ENCODE measurements at regions of chr14 and their contacts with region 1.

Region 1: GRCh38 chr14:61252369-61253063 is 28.6 kb downstream of the TMEM30B start:
- DNase-seq: peak; percentile 30 to 84 (median 62)
- H3K4me3 ChIP-seq: no peak overlapping the region
- H3K27ac ChIP-seq: no peak overlapping the region
- H3K27me3 ChIP-seq: peaks cover 0 to 3% (median 0%) of the 10 kb centered on the region in 45 donors
- CTCF ChIP-seq: peak; percentile 30 to 98 (median 87)

Region 2: GRCh38 chr14:60420050-60420449 is 832.5 kb before region 1 on chr14:
- intact Hi-C with region 1: no loop called
- DNase-seq: no peak
- H3K4me3 ChIP-seq: no peak overlapping the region
- H3K27ac ChIP-seq: no peak overlapping the region
- H3K27me3 ChIP-seq: peaks cover 0 to 2% (median 0%) of the 10 kb centered on the region in 45 donors
- CTCF ChIP-seq: no peak

Region 3: DNA sequence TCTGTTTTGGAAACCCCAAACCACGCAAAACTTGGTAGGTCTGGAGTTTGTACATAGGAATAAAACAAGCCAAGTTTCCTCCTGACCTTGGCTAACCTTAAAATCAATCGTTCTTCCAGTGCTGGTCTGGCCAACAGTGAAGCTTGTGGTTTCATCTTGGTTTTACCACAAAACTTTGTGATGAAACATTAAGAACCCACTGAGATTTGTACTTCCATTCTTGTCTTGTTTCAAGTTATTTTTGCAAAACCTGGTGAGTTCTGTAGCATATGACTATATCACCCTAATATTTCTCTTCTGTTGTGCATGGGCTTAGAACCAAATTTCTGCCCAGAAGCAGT is 629.6 kb before region 1 on chr14:
- intact Hi-C with region 1: loop called (anchors 2 to 5 kb)
- DNase-seq: no peak
- H3K4me3 ChIP-seq: no peak overlapping the region
- H3K27ac ChIP-seq: no peak overlapping the region
- H3K27me3 ChIP-seq: peaks cover 0 to 9% (median 0%) of the 10 kb centered on the region in 45 donors
- CTCF ChIP-seq: no peak

Region 4: GRCh38 chr14:60632777-60633176 is 619.7 kb before region 1 on chr14:
- intact Hi-C with region 1: loop called in 1 of 2 experiments (anchors 2 kb)
- DNase-seq: no peak
- H3K4me3 ChIP-seq: no peak overlapping the region
- H3K27ac ChIP-seq: no peak overlapping the region
- H3K27me3 ChIP-seq: peaks cover 0 to 25% (median 16%) of the 10 kb centered on the region in 45 donors
- CTCF ChIP-seq: no peak